ENCODE measurements at regions of chr9 and their contacts with region 1.

Region 1: GRCh38 chr9:76887003-76887821 is 18.7 kb downstream of the PRUNE2 start:
- DNase-seq: no peak

Region 2: DNA sequence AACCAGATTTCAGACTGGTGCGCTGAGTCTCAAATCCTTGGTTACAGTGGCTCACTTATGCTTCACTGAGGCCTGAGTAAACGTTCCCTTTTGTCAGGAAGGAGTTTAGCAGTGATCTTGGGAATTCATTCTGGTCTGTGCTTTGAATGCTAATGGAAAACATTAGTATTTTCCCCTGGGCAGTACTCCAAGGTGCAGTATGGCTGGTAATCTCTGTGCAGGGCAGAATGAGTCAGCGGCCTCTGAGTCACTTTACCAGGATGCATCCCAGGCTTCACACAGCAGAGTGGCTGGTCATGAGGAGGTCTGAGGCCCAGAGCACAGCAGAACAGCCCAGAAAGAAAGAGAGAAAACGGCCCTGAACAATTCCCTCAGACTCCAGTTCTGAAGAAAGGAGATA is 68.9 kb before region 1 on chr9:
- intact Hi-C with region 1: loop called (anchors 5 kb)
- DNase-seq: peak in 7 of 10 donors; percentile 22 to 90 (median 62)